ENCODE measurements at regions of chrX and their contacts with region 1.

Region 1: GRCh38 chrX:20252381-20253231 is 14.1 kb downstream of the RPS6KA3 start:
- DNase-seq: peak; percentile 78
- H3K4me3 Mint-ChIP-seq: peak overlapping the region; percentile 23
- H3K27ac Mint-ChIP-seq: peak overlapping the region; percentile 88
- H3K4me1 Mint-ChIP-seq: peaks cover 52% of the 10 kb centered on the region
- H3K27me3 Mint-ChIP-seq: no peaks in the 10 kb centered on the region

Region 2: DNA sequence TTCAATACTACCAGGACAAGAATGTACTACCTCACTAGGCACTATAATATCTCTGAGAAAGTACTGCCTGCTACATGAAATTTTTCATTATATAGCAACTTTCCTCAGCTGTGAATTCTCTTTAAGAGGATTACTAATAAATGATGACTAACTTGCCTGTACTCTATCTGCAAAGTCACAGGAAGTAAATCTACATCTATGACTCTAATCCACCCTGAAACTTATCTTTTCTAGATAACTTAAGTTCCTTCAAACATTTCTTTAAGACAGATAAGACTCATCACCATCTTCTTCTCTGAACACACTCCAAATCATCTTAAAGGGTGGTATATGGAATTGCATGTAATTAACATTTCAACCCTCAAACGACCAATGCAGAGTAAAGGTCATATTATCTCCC is 14.7 kb before region 1 on chrX:
- CTCF ChIA-PET with region 1: interaction called, 12 read pairs
- POLR2A ChIA-PET with region 1: no interaction called
- intact Hi-C with region 1: no loop called
- DNase-seq: no peak
- H3K4me3 Mint-ChIP-seq: no peak overlapping the region
- H3K27ac Mint-ChIP-seq: peak overlapping the region; percentile 69
- H3K4me1 Mint-ChIP-seq: peaks cover 41% of the 10 kb centered on the region
- H3K27me3 Mint-ChIP-seq: no peaks in the 10 kb centered on the region

Region 3: GRCh38 chrX:20266810-20267606 is 14.4 kb after region 1 on chrX and contains the start of gene RPS6KA3:
- CTCF ChIA-PET with region 1: interaction called, 6 read pairs
- POLR2A ChIA-PET with region 1: interaction called, 6 read pairs
- intact Hi-C with region 1: loop called (anchors 1 kb)
- DNase-seq: peak; percentile 93
- H3K4me3 Mint-ChIP-seq: peak within 1 kb of the TSS; percentile 95
- H3K27ac Mint-ChIP-seq: peak within 1 kb of the TSS; percentile 99
- H3K4me1 Mint-ChIP-seq: peaks cover 18% of the 10 kb centered on the region
- H3K27me3 Mint-ChIP-seq: no peaks in the 10 kb centered on the region
- total RNA-seq, gene RPS6KA3: 51.8 to 52.0 TPM

Region 4: GRCh38 chrX:20320461-20321159 is 68.0 kb after region 1 on chrX:
- CTCF ChIA-PET with region 1: no interaction called
- POLR2A ChIA-PET with region 1: no interaction called
- intact Hi-C with region 1: no loop called
- DNase-seq: peak; percentile 15
- H3K4me3 Mint-ChIP-seq: peak overlapping the region; percentile 4
- H3K27ac Mint-ChIP-seq: no peak overlapping the region
- H3K4me1 Mint-ChIP-seq: peaks cover 23% of the 10 kb centered on the region
- H3K27me3 Mint-ChIP-seq: no peaks in the 10 kb centered on the region